Adrenal gland (tissue), 19 donors: ENCODE measurements at regions of chr15 and their contacts with region 1.

Region 1: GRCh38 chr15:27059610-27060202 is 88.7 kb downstream of the GABRG3 start:
- DNase-seq: peak; percentile 34 to 81 (median 61)
- H3K4me3 ChIP-seq: no peak overlapping the region
- H3K27ac ChIP-seq: no peak overlapping the region
- H3K4me1 ChIP-seq: no peaks in the 10 kb centered on the region
- H3K27me3 ChIP-seq: no peaks in the 10 kb centered on the region
- CTCF ChIP-seq: peak; percentile 44 to 69 (median 58)
- POLR2A ChIP-seq: no peak

Region 2: DNA sequence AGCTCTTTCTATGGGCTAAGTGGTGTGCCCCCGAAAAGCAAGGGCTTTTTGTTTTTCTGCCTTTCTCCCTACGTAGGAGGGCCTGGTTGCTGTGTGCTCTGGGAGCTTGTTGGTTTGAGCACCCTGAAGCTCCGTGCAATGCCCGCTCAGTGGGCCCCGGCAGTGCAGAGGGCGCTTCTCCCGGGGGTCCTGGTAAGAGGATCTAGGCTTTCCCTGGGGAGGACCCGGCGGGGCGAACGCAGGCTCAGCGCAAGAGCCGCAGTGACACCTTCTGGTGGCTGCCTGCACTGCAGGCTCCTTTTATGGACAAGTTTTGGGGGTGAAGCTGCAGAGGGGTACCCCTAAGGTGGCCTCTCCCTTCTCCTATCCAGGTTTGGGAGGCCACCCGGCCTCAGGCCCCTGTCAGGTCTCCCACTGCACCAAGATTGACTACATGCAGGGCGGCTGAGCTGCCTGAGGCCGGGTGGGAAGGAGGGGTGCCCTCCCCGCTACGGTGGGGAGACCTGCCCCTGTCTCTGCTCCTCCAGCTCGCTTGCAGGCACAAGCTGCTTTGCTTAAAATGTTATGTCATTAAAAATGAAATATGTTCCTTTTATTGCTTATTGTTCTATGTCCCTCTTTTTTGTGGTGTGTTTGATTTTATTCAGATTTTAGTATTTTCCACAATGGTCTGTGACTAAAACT is 299.2 kb after region 1 on chr15:
- intact Hi-C with region 1: loop called (anchors 5 to 10 kb)
- DNase-seq: peak in 6 of 7 donors; percentile 11 to 60 (median 35)
- H3K4me3 ChIP-seq: no peak overlapping the region
- H3K27ac ChIP-seq: no peak overlapping the region
- H3K4me1 ChIP-seq: no peaks in the 10 kb centered on the region
- H3K27me3 ChIP-seq: peaks cover 4% of the 10 kb centered on the region
- CTCF ChIP-seq: peak; percentile 62 to 84 (median 75)
- POLR2A ChIP-seq: no peak